OCI-LY7 (cell line): ENCODE measurements at regions of chr9 and their contacts with region 1.

Region 1: DNA sequence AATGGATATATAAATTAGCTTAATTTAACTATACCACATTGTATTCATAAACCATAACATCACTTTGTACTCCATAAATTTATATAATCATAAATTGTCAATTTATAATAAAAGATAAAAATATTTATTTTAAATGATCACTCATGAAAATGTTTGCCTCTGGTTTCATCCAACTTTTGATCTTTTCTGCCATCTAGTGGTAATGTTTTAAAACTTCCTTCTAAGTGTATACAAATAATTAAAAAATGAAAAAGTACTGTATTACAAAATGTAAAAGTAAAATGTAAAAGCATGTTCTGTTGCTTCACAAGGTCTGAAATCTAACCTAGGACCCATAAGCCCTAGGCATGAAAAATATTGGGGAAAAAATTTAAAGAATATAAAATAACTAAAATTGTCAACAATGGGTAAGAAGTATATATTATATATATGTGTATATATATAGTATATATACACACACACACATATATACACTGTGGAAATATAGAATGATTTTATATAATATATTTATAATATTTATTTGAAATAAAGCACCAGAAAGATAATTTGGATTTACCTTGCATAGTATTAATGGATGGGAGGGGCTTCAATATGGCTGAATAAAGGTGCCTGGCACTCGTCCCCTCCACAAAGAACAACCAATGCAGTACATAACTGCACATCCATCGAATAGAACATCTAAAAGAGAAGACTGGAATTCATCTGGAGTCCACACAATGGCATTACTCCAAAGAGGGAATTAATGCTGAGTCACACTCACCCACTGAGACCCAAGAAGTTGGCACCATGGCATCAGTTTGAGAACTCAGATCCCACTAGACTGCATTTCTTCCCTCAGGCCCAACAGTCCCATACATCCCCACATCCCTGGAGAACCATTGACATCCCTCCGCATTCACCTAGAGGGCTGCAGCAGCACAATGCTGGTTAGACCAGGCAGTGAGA is 32.5 kb downstream of the ANXA1 start:
- DNase-seq: peak; percentile 52
- H3K4me3 ChIP-seq: no peak overlapping the region
- H3K27ac ChIP-seq: no peak overlapping the region
- H3K4me1 ChIP-seq: no peaks in the 10 kb centered on the region
- CTCF ChIP-seq: peak; percentile 76

Region 2: GRCh38 chr9:72871685-72872084 is 312.5 kb before region 1 on chr9:
- CTCF ChIA-PET with region 1: no interaction called
- POLR2A ChIA-PET with region 1: no interaction called
- intact Hi-C with region 1: loop called (anchors 5 kb)
- DNase-seq: no peak
- H3K4me3 ChIP-seq: no peak overlapping the region
- H3K27ac ChIP-seq: no peak overlapping the region
- H3K4me1 ChIP-seq: no peaks in the 10 kb centered on the region
- CTCF ChIP-seq: peak; percentile 60

Region 3: DNA sequence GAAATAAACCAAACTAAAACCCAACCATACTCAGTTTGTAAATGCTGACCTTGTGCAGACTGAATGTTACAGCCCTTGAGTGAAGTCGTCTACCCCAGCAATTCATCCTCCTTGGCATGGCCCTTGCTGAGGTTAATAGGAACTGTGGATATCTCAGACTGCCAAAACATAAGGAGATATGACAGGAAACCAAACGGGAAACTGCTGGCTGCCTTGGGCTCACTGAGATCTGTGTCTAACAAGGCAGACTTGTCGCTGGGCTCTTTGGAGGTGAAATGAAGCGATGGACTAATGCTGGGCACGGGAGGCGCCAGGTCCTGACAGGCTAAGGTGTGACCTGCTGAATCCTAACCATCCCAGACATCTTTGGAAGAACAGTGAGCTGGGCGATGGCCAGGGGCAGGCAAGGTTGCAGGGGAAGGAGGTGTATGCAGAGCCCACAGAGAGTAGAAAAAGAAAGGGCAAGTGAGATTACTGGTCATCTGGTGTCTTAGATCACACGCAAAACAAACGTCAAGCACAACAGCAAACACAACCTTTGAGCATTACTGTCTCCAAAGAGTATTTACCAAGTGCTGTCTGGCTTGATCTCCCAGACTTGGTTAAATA is 186.7 kb before region 1 on chr9:
- CTCF ChIA-PET with region 1: no interaction called
- POLR2A ChIA-PET with region 1: no interaction called
- intact Hi-C with region 1: no loop called
- DNase-seq: no peak
- H3K4me3 ChIP-seq: no peak overlapping the region
- H3K27ac ChIP-seq: no peak overlapping the region
- H3K4me1 ChIP-seq: no peaks in the 10 kb centered on the region
- CTCF ChIP-seq: no peak

Region 4: GRCh38 chr9:73104342-73104741 is 79.8 kb before region 1 on chr9:
- CTCF ChIA-PET with region 1: no interaction called
- POLR2A ChIA-PET with region 1: no interaction called
- intact Hi-C with region 1: loop called (anchors 1 kb)
- DNase-seq: no peak
- H3K4me3 ChIP-seq: no peak overlapping the region
- H3K27ac ChIP-seq: no peak overlapping the region
- H3K4me1 ChIP-seq: no peaks in the 10 kb centered on the region
- CTCF ChIP-seq: no peak

Region 5: GRCh38 chr9:73216100-73216499 is 31.9 kb after region 1 on chr9:
- CTCF ChIA-PET with region 1: no interaction called
- POLR2A ChIA-PET with region 1: no interaction called
- intact Hi-C with region 1: no loop called
- DNase-seq: no peak
- H3K4me3 ChIP-seq: no peak overlapping the region
- H3K27ac ChIP-seq: no peak overlapping the region
- H3K4me1 ChIP-seq: no peaks in the 10 kb centered on the region
- CTCF ChIP-seq: no peak